Mammary epithelial cell (primary cell): ENCODE measurements at regions of chr1 and their contacts with region 1.

Region 1: DNA sequence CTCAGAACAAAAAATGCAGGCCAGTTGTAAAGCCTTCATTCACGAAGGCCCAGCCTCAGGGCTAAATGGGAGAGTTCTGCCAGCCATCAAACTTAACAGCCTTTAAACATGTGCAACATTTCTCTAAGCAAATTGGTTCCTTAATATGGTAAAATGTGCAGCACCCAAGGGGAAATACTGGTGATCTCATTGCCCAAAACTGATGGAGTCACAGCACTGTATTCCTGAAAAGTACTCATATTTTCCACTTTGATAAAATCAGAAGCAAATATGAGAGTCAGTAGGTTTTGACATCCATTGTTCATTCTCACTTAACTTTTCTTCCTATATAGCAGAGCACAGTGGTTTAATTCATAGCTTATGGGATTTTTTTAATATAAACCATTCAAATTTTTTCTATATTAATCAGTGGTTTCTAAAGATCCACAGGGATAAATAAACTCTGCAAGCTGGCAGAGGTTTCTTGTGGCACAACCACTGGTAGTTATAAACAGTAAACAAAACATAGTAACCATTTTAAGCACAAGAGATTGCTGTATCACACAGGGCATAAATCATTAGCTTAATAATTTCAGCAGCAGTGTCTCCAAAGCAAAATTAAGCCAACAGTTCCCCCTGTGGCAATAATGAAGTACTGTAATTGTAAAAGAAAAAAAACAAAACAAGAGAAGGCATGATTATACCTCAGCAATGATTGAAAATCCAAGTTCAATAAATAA is 106.9 kb upstream of the LYPLAL1 start:
- DNase-seq: peak; percentile 62
- H3K4me3 ChIP-seq: no peak overlapping the region
- H3K27ac ChIP-seq: peak overlapping the region; percentile 65
- H3K4me1 ChIP-seq: peaks cover 14% of the 10 kb centered on the region
- H3K27me3 ChIP-seq: no peaks in the 10 kb centered on the region
- CTCF ChIP-seq: peak; percentile 66 to 70

Region 2: GRCh38 chr1:218521375-218522169 is 545.2 kb before region 1 on chr1:
- CTCF ChIA-PET with region 1: no interaction called
- dilution Hi-C with region 1: no loop called
- in situ Hi-C with region 1: no loop called
- intact Hi-C with region 1: loop called (anchors 5 kb)
- DNase-seq: peak; percentile 35
- H3K4me3 ChIP-seq: no peak overlapping the region
- H3K27ac ChIP-seq: no peak overlapping the region
- H3K4me1 ChIP-seq: no peaks in the 10 kb centered on the region
- H3K27me3 ChIP-seq: no peaks in the 10 kb centered on the region
- CTCF ChIP-seq: peak; percentile 61 to 70

Region 3: DNA sequence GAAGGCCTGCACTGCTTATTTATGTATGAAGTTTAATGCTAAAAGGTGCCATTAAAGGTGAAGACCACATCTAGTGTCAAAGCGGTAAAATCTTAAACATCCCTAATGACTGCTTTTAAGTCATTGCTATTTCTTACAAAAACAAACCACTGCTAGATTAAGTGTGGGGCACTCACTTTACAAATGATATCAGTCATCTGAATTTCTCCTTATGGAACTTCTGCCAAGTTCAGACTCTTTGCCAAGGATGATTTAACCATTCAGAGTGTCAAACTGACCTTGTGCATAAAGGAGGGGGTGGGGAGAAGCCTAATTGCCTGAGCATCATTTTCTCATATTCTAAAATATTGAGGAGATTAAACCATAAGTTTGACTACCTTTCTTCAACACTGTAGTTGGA is 450.1 kb before region 1 on chr1:
- CTCF ChIA-PET with region 1: no interaction called
- dilution Hi-C with region 1: no loop called
- in situ Hi-C with region 1: no loop called
- intact Hi-C with region 1: loop called (anchors 10 kb)
- DNase-seq: no peak
- H3K4me3 ChIP-seq: no peak overlapping the region
- H3K27ac ChIP-seq: no peak overlapping the region
- H3K4me1 ChIP-seq: peaks cover 23% of the 10 kb centered on the region
- H3K27me3 ChIP-seq: no peaks in the 10 kb centered on the region
- CTCF ChIP-seq: no peak

Region 4: DNA sequence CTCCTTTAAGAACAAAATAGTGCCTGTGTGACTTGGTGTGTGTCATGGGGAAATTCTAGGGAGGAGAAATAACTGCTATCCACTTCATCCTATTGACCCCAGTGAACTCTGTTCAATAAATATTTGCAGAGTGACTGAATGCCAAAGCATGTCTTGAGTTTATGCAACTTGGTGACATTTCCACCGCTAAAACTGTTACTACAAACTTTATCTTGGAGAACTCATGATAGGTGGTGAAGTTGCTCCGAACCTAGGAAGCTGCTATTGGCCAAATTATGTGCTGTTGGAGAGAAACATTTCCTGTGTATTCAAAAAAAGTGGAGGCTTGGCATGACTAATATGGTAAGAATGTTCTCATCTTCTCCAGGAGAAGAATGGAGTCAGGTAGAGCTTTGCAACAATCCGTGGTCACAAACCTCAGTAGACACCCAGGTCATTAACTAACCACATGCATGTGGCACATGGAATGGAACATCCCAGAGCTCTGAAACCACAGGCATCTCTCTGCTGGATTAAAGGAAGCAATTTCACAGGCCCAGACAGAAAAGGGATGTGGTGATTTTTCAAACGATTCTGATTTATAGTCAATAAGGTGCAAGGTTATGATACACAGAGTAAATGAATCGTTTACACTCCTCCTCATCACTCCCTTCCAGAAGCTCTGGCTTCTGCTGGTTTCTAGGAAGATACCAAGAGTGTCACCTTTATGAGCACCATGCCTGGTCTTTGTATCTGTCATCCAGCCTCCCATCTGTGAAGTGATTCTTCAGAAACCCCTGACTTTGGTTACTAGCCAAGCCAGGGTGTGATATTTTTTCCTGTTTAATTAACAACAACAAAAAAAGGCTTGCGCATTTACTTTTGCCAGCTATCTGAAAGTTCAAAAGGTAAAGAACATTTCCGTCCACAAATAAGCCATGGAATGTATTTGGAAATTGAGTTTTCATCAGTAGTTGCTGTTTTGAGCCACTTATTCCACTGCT is 360.6 kb before region 1 on chr1:
- CTCF ChIA-PET with region 1: interaction called, 3 read pairs
- dilution Hi-C with region 1: no loop called
- in situ Hi-C with region 1: loop called in 1 of 2 experiments (anchors 25 kb)
- intact Hi-C with region 1: loop called (anchors 1 kb)
- DNase-seq: peak; percentile 99
- H3K4me3 ChIP-seq: no peak overlapping the region
- H3K27ac ChIP-seq: peak overlapping the region; percentile 98
- H3K4me1 ChIP-seq: peaks cover 39% of the 10 kb centered on the region
- H3K27me3 ChIP-seq: no peaks in the 10 kb centered on the region
- CTCF ChIP-seq: no peak

Region 5: DNA sequence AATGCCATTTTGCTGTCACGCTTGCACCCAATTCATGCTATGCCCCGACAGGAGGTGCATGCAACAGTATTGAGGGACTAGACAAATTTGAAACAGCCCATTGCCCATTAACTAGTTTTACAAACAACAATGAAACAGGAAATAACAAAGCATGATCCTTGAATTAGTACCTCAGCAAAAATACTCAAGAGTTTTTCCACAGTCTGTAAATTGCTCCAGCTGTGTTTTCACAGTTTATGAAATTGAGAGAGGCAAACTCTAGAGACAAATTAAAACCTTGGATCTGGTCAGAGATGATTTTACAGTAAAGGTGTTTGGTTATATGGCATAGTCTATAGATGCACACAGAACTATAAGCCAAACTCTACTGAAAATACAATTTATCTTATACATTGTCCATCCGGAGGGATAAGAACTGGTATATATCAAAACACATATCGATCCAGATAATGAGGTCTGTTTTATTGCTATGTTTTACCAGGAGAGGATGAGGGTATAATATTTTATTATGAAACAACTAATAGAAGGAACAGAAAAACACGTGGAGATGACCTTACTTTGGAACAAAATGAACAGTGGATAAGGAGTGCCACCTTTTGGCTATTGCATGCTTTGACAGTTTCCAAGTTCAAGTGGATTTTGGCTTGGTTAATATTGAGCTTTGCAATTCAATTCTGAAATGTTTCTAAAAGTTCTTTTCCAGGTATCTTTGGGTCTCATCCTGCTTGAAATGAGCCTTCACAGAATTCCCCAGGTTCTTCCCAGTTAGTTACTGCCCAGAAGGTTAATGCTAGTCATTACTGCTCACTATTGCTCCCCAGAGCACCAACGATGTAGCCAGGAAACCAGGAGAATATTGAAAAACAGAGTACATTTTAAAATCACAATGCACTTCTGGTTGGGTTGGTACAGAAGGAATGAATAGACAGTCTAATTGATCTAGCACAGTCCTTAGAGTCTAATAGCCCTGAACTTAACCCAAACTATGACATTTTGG is 500.5 kb after region 1 on chr1:
- CTCF ChIA-PET with region 1: no interaction called
- dilution Hi-C with region 1: no loop called
- in situ Hi-C with region 1: no loop called
- intact Hi-C with region 1: loop called (anchors 5 kb)
- DNase-seq: peak; percentile 17
- H3K4me3 ChIP-seq: no peak overlapping the region
- H3K27ac ChIP-seq: no peak overlapping the region
- H3K4me1 ChIP-seq: no peaks in the 10 kb centered on the region
- H3K27me3 ChIP-seq: peaks cover 5% of the 10 kb centered on the region
- CTCF ChIP-seq: peak; percentile 55 to 67